Activated CD8-positive, alpha-beta T cell treated with anti-CD3 and anti-CD28 coated beads, Interleukin-2, amount 10 ng/mL, durations not matched to agents 7 days and 5 days (primary cell): ENCODE measurements at regions of chr1 and their contacts with region 1.

Region 1: DNA sequence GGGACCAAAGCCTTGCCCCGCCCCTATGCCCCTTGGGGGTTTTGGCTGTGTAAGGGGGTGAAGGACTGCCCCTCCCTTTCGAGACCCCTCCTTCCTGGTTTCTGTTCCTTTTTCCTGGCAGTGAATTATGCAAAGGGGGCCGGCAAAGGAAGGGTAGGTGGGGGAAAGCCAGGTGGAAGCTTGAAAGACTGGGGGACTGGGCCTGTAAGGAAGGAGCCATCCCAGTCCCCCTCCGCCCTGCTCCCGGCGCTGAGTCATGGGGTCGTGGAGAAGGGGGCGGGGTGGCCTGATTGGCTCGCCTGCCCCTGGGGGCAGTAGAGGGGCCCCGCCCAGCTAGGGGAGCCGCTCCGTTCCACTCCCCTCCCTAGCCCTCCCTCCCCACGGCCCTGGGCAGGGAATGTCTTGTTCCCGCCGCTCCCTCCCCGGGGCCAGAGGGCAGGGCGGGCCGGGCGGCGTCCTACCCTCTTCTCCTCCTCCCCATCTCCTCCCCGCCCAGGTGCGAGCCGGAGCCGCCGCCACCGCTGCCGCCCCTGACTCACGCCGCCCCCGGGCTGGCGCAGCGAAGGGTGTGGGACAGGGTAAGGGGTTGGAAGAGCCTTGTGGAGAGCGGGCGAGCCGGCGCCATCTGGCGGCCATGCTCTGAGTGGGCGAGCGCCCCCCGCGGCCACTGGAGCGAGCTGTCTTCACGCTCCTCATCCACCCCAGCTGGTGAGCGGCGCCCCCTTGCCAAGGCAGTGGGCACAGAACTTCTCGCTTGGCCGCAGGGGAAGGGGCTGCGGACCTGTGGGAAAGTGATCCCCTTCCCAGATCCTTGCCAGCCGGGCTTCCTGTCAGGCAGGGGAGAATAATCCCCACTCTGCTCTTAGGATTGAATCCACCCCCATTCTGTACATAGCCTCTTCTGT is 14.7 kb downstream of the ZBTB7B start:
- DNase-seq: peak; percentile 87
- ATAC-seq: peak; percentile 98
- H3K4me3 Mint-ChIP-seq: peak overlapping the region; percentile 22
- H3K27ac Mint-ChIP-seq: peak overlapping the region; percentile 52
- H3K4me1 Mint-ChIP-seq: peaks cover 50% of the 10 kb centered on the region
- H3K27me3 Mint-ChIP-seq: peaks cover 6% of the 10 kb centered on the region

Region 2: GRCh38 chr1:154925335-154926170 is 91.7 kb before region 1 on chr1:
- CTCF ChIA-PET with region 1: no interaction called
- POLR2A ChIA-PET with region 1: no interaction called
- DNase-seq: no peak
- ATAC-seq: no peak
- H3K4me3 Mint-ChIP-seq: no peak overlapping the region
- H3K27ac Mint-ChIP-seq: peak overlapping the region; percentile 86
- H3K4me1 Mint-ChIP-seq: peaks cover 19% of the 10 kb centered on the region
- H3K27me3 Mint-ChIP-seq: no peaks in the 10 kb centered on the region

Region 3: DNA sequence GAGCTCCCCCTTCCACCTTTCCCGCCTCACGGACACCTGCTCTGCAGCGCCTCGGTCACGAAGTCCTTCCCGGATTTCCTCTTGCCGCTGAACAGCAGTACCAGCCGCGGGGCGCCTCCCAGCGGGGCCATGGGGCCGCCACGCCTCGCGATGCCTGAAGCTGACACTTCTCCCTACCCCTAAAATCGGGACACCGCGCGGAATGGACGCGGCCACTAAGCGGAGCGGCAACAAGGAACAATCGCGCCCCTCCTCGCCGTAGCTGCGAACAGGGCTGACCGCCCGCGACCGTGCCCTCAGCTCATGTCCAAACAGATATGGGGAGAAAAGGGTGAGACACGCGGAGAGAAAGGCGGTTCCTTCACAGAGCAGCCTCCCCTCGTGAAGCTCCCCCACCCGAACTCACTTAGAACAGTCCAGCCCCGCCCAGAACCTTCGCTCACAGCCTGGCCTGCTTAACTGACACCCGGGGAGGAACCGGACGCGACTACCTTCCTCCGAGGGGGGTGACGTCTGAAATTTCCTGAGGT is 80.7 kb before region 1 on chr1 and contains the start of gene PMVK:
- CTCF ChIA-PET with region 1: interaction called, 24 read pairs
- POLR2A ChIA-PET with region 1: no interaction called
- DNase-seq: peak; percentile 98
- ATAC-seq: peak; percentile 86
- H3K4me3 Mint-ChIP-seq: peak within 1 kb of the TSS; percentile 95
- H3K27ac Mint-ChIP-seq: peak within 1 kb of the TSS; percentile 96
- H3K4me1 Mint-ChIP-seq: peaks cover 56% of the 10 kb centered on the region
- H3K27me3 Mint-ChIP-seq: no peaks in the 10 kb centered on the region
- total RNA-seq, gene PMVK: 40.9 to 43.8 TPM

Region 4: DNA sequence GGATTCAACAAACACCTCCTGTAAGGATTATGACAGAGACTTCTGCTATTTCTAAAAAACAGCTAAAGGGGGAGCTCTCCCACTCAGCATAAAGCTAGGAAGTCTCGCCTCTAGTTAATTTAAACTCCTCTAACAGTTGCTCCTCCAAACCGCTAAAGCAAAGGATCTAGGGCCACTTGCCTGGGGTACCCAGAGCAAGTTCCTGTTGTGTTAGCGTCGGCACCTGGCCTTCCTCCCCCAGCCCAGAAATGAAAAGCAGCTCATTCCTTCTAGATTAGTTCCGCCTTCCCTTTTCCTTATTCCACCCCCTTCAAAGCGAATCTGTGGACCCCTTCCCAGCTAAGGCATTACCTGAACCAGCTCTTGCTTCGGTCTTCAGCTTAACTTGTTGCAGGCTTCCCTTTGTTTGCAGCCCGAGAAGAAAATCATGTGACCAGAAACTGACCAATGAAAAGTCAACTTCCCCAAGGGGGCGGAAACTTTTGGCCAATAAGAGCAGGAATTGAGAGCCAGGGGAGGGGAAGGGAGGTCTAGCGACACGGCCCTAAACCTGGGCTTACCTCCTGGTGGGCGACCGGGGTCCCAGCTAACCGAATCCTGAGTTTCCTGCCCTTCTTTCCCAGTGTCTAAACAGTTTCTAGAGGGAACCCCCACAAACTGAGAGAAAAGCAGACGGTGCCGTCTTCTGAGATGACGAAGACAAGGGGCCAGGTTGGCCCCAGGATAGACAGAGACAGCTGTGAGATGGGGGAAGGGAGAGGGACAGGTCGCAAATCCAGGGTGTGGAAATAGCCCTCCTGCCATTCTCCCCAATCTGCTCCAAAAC is 61.4 kb before region 1 on chr1 and contains the start of gene PBXIP1:
- CTCF ChIA-PET with region 1: interaction called, 27 read pairs
- POLR2A ChIA-PET with region 1: interaction called, 6 read pairs
- DNase-seq: peak; percentile 91
- ATAC-seq: peak; percentile 47
- H3K4me3 Mint-ChIP-seq: peak within 1 kb of the TSS; percentile 91
- H3K27ac Mint-ChIP-seq: peak within 1 kb of the TSS; percentile 96
- H3K4me1 Mint-ChIP-seq: peaks cover 80% of the 10 kb centered on the region
- H3K27me3 Mint-ChIP-seq: no peaks in the 10 kb centered on the region
- total RNA-seq, gene PBXIP1: 44.5 to 48.2 TPM

Region 5: GRCh38 chr1:154974063-154974807 is 43.1 kb before region 1 on chr1 and contains the start of gene CKS1B:
- CTCF ChIA-PET with region 1: interaction called, 19 read pairs
- POLR2A ChIA-PET with region 1: interaction called, 8 read pairs
- DNase-seq: peak; percentile 98
- ATAC-seq: peak; percentile 91
- H3K4me3 Mint-ChIP-seq: no peak within 1 kb of the TSS
- H3K27ac Mint-ChIP-seq: no peak within 1 kb of the TSS
- H3K4me1 Mint-ChIP-seq: peaks cover 40% of the 10 kb centered on the region
- H3K27me3 Mint-ChIP-seq: no peaks in the 10 kb centered on the region
- total RNA-seq, gene CKS1B: 151 to 153 TPM

Region 6: GRCh38 chr1:154992721-154993571 is 24.3 kb before region 1 on chr1:
- CTCF ChIA-PET with region 1: interaction called, 71 read pairs
- POLR2A ChIA-PET with region 1: no interaction called
- DNase-seq: no peak
- ATAC-seq: no peak
- H3K4me3 Mint-ChIP-seq: no peak overlapping the region
- H3K27ac Mint-ChIP-seq: no peak overlapping the region
- H3K4me1 Mint-ChIP-seq: peaks cover 27% of the 10 kb centered on the region
- H3K27me3 Mint-ChIP-seq: no peaks in the 10 kb centered on the region

Region 7: GRCh38 chr1:155034318-155035208 is 17.3 kb after region 1 on chr1:
- CTCF ChIA-PET with region 1: interaction called, 11 read pairs
- POLR2A ChIA-PET with region 1: interaction called, 3 read pairs
- DNase-seq: no peak
- ATAC-seq: no peak
- H3K4me3 Mint-ChIP-seq: no peak overlapping the region
- H3K27ac Mint-ChIP-seq: no peak overlapping the region
- H3K4me1 Mint-ChIP-seq: peaks cover 10% of the 10 kb centered on the region
- H3K27me3 Mint-ChIP-seq: peaks cover 24% of the 10 kb centered on the region

Region 8: GRCh38 chr1:155050560-155051341 is 33.5 kb after region 1 on chr1 and contains the start of gene ADAM15:
- CTCF ChIA-PET with region 1: interaction called, 57 read pairs
- POLR2A ChIA-PET with region 1: no interaction called
- DNase-seq: peak; percentile 81
- ATAC-seq: peak; percentile 89
- H3K4me3 Mint-ChIP-seq: peak within 1 kb of the TSS; percentile 83
- H3K27ac Mint-ChIP-seq: peak within 1 kb of the TSS; percentile 85
- H3K4me1 Mint-ChIP-seq: peaks cover 31% of the 10 kb centered on the region
- H3K27me3 Mint-ChIP-seq: peaks cover under 1% of the 10 kb centered on the region
- total RNA-seq, gene ADAM15: 29.7 to 29.8 TPM